Naive thymus-derived CD8-positive, alpha-beta T cell (primary cell): ENCODE measurements at regions of chr6 and their contacts with region 1.

Region 1: DNA sequence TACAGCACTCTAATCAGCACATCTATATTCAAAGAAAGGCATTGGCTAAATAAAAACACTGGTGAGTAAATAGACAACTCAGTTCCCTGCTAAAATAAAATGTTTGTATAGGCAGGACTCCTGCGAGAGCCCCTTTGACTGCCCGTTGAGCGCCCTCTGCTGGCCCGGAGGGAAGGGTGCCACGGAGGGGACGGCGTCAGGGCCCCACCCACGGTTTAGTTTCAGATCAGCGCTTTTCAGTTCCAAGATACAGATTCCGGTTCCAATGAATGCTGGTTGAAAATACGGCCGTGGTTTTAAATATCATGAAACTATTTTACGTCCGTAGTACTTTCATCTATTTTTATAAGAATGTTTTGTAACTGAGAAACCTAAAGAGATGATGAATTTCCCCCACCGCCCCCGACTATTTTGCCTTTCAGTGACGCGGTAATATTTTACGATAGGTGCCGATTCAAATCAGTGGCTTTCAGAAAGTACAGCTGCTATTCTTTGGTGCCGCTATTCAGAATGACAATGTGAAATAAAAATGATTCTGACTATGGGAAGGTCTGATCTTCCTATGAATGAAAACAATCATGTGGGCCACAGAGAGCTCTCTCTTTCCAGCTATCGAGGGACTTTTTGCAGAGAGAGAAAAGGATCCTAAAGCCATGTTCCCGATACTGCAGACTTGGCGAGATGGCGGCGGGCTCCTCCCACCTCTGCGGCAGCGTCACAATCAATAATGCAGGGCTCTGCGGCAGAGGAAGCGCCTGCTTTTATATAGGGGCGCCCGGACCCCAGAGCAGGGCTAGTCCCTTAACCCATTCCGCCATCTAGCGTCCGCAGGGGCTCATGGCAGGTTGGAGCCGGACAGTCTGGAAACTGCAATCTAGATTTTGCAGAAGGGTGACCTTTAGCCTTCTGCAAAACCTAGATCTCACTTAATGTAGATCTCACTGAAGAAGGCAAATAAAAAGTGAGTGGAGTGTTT is 10.6 kb upstream of the CCN6 start:
- DNase-seq: peak; percentile 85 to 95 (median 92)
- ATAC-seq: peak; percentile 94 to 95
- H3K4me3 Mint-ChIP-seq: peak overlapping the region; percentile 91 to 99 (median 97)
- H3K27ac Mint-ChIP-seq: peak overlapping the region; percentile 92 to 100 (median 99)
- H3K4me1 Mint-ChIP-seq: peaks cover 9 to 25% (median 21%) of the 10 kb centered on the region in 4 donors
- H3K27me3 Mint-ChIP-seq: no peaks in the 10 kb centered on the region

Region 2: GRCh38 chr6:111709615-111710398 is 333.5 kb before region 1 on chr6:
- POLR2A ChIA-PET with region 1: interaction called, 14 read pairs
- DNase-seq: peak; percentile 25 to 81 (median 62)
- ATAC-seq: peak; percentile 89 to 93
- H3K4me3 Mint-ChIP-seq: peak overlapping the region in 8 of 10 donors; percentile 5 to 72 (median 66)
- H3K27ac Mint-ChIP-seq: peak overlapping the region; percentile 66 to 94 (median 90)
- H3K4me1 Mint-ChIP-seq: peaks cover 11 to 54% (median 39%) of the 10 kb centered on the region in 4 donors
- H3K27me3 Mint-ChIP-seq: no peaks in the 10 kb centered on the region

Region 3: DNA sequence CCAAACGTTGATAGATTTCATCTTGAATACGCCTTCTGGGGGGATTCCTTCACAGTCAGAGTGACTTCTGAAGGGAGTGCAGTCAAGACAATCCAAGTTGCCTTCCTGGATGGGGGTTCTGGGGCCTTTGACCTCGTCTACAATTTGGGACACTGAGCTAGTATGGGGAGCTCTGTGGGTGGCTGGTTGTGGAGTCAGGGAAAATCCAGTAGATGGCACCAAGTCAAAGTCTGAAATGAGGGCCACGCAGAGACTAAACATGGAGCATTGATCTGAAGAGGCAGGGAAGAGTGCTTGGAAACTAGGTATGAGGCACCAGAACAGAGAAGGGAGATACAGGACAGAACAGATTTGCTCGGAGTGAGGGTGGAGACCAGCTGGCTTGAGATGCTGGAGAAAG is 33.0 kb before region 1 on chr6:
- POLR2A ChIA-PET with region 1: interaction called, 84 read pairs
- DNase-seq: peak in 6 of 10 donors; percentile 4 to 68 (median 34)
- ATAC-seq: peak; percentile 62 to 93
- H3K4me3 Mint-ChIP-seq: no peak overlapping the region
- H3K27ac Mint-ChIP-seq: peak overlapping the region in 6 of 10 donors; percentile 1 to 51 (median 22)
- H3K4me1 Mint-ChIP-seq: peaks cover 5 to 12% (median 6%) of the 10 kb centered on the region in 4 donors
- H3K27me3 Mint-ChIP-seq: no peaks in the 10 kb centered on the region

Region 4: GRCh38 chr6:112018619-112019416 is 24.5 kb before region 1 on chr6:
- POLR2A ChIA-PET with region 1: interaction called, 84 read pairs
- DNase-seq: no peak
- ATAC-seq: no peak
- H3K4me3 Mint-ChIP-seq: no peak overlapping the region
- H3K27ac Mint-ChIP-seq: peak overlapping the region in 1 of 10 donors; percentile 21
- H3K4me1 Mint-ChIP-seq: peaks cover 11 to 22% (median 16%) of the 10 kb centered on the region in 4 donors
- H3K27me3 Mint-ChIP-seq: no peaks in the 10 kb centered on the region

Region 5: DNA sequence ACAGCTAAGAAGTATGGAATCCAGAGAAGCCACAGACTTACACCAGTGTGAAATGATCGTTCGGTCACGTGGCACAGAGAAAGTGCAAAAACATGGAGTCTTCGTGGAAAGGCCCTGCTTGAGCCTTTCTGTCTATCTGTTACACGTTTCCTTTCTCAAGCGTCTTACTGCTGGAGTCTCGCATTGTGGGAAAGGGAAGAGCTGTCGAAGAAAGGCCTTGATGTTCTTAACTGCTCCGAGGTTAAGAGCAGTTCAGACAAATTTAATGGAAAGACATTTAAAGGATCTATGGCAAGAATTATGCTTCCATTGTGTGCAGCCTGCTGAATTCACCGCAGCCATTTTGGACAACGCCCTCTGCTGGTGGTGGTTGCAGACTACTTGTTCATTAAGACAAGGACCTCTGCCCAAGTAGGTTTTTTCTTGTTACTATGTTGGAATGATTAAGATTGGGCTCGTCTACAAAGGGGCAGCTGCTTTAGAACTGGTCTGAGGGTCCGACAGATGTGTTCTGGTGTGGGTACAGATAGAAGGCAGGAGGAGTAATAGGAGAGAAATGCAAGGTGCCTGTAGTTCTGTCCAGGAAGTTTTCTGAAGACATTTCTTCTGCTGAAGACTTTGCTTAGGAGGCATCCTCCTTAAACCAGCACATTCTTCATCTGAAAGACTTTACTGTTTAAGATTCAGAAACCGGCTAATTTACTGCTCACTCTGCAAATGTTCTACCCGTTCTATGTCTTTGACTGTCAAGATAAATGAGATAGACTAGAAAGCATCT is 14.1 kb before region 1 on chr6:
- POLR2A ChIA-PET with region 1: interaction called, 88 read pairs
- DNase-seq: peak; percentile 13 to 70 (median 27)
- ATAC-seq: no peak
- H3K4me3 Mint-ChIP-seq: peak overlapping the region in 8 of 10 donors; percentile 45 to 77 (median 65)
- H3K27ac Mint-ChIP-seq: peak overlapping the region; percentile 95 to 99 (median 98)
- H3K4me1 Mint-ChIP-seq: peaks cover 44 to 80% (median 75%) of the 10 kb centered on the region in 4 donors
- H3K27me3 Mint-ChIP-seq: no peaks in the 10 kb centered on the region